ENCODE measurements at regions of chr18 and their contacts with region 1.

Region 1: DNA sequence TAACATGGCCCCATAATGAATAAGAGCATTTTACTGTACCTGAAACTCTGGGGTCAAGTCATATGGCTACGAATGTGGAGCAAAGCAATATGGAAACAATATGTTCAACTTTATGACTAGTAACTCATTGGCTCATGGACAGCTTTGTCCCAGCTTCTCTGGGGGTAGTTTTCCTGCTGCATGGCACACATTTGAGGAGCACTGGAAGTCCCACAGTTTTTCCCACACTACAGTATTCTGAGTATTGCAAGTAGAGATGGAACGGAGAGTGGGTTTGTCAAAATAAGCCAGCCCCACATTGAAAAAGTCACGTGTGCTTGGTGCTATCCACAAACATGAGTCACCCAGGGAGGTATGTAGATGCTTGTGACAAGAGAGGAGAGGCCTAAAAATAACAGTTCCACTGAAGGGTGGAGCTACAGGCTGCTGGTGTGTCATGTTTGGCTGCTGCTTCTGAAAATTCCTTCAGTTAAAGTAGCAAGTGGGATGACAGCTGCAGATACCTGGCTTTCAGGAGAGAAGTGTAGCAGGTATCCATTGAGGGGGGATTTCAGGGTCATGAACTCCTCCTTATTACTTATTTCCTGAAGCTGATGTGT is 48.2 kb upstream of the CTAGE1 start:
- DNase-seq: peak; percentile 73
- H3K4me3 ChIP-seq: no peak overlapping the region
- H3K27ac ChIP-seq: peak overlapping the region; percentile 97
- H3K4me1 ChIP-seq: peaks cover 49% of the 10 kb centered on the region
- H3K27me3 ChIP-seq: no peaks in the 10 kb centered on the region
- CTCF ChIP-seq: no peak
- POLR2A ChIP-seq: no peak

Region 2: GRCh38 chr18:22432672-22433137 is 33.3 kb before region 1 on chr18:
- CTCF ChIA-PET with region 1: no interaction called
- POLR2A ChIA-PET with region 1: no interaction called
- dilution Hi-C with region 1: no loop called
- intact Hi-C with region 1: loop called (anchors 1 kb)
- DNase-seq: peak; percentile 93
- H3K4me3 ChIP-seq: no peak overlapping the region
- H3K27ac ChIP-seq: peak overlapping the region; percentile 67
- H3K4me1 ChIP-seq: peaks cover 25% of the 10 kb centered on the region
- H3K27me3 ChIP-seq: no peaks in the 10 kb centered on the region
- CTCF ChIP-seq: no peak
- POLR2A ChIP-seq: peak; percentile 46

Region 3: GRCh38 chr18:22451796-22452195 is 14.2 kb before region 1 on chr18:
- CTCF ChIA-PET with region 1: interaction called, 11 read pairs
- POLR2A ChIA-PET with region 1: no interaction called
- dilution Hi-C with region 1: no loop called
- intact Hi-C with region 1: loop called (anchors 1 kb)
- DNase-seq: peak; percentile 29
- H3K4me3 ChIP-seq: no peak overlapping the region
- H3K27ac ChIP-seq: peak overlapping the region; percentile 74
- H3K4me1 ChIP-seq: peaks cover 9% of the 10 kb centered on the region
- H3K27me3 ChIP-seq: no peaks in the 10 kb centered on the region
- CTCF ChIP-seq: no peak
- POLR2A ChIP-seq: no peak